ENCODE measurements at regions of chr1 and their contacts with region 1.

Region 1: DNA sequence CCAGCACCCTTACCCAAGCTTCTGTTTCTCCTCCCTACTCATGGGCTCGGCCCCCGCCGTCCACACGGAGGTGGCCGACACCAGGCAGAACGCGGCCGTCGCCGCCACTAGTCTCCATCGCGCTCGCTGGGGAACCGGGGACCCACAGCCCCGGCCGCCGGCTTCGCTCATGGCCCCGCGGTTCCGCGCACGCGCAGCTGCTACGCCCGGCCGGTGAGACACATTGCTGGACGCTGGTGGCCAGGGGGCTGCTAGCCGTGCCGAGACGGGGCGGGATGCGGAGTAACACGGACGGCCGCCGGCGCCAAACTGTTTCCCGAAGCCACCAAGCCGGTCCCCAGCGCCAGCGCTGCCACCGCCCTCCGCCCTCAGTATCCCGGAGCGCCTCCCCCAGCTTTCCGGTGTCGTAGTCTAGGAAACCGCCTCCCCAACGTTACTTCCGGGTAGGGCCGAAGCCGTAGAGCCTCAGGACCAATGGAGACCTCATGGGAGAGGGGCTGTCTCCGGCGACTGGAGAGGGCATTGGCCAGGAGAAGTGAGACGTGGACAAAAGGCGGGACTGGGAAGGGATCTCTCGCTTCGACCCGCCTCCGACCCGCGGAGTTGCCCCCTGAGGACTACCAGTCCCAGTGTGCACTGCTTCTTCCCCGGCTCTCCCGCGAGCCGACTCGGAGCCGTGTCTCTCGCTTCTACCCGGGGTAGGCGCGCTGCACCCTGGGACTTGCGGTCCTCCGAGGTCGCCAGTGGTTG is at the start of gene EDEM3:
- DNase-seq: peak; percentile 99
- H3K4me3 Mint-ChIP-seq: peak within 1 kb of the TSS; percentile 98
- H3K27ac Mint-ChIP-seq: peak within 1 kb of the TSS; percentile 96
- H3K4me1 Mint-ChIP-seq: peaks cover 23% of the 10 kb centered on the region
- H3K27me3 Mint-ChIP-seq: peaks cover 7% of the 10 kb centered on the region
- total RNA-seq, gene EDEM3: 23.6 and 28.3 TPM in 2 replicates

Region 2: DNA sequence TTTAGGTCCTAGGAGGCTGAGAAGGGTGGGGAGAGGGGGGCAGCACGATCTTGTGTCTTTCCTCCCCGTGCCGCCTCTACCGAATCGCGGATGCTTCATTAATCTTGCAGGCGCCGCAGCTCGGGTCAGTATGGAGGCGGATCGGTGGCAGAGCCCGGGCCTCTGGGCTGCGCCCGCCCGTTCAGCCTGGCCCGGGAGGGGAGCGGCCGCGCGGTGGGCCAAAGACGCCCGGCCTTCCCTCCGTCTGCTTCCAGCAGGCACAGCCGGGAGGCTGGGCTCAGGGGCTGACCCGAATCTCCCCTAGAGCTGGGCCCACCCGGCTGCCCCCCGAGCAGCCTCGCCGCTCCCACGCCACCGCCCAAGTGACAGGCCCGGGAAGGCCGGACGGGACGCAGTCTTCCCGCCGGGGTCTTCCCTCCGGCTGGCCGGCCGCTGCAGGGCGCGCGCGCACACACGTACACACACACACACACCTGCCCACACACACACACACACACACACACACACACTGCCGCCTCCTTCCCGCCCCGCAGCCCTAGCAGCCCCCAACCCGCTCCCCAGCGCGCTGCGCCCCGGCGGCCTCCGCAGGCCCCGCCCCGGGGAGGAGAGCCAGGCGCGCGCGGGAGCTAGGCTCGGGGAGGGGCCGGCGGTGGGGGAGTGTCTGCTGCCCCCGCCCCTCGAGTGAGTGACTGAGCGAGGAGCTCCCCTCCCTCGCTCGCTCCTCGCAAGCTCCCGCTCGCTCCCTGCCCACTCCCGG is 368.2 kb before region 1 on chr1 and contains the start of gene C1orf21:
- intact Hi-C with region 1: loop called (anchors 5 kb)
- DNase-seq: peak; percentile 94
- H3K4me3 Mint-ChIP-seq: peak within 1 kb of the TSS; percentile 84
- H3K27ac Mint-ChIP-seq: peak within 1 kb of the TSS; percentile 83
- H3K4me1 Mint-ChIP-seq: peaks cover 16% of the 10 kb centered on the region
- H3K27me3 Mint-ChIP-seq: peaks cover 81% of the 10 kb centered on the region
- total RNA-seq, gene C1orf21: 1.8 and 2.5 TPM in 2 replicates

Region 3: GRCh38 chr1:184792450-184792969 is 37.9 kb after region 1 on chr1:
- intact Hi-C with region 1: loop called (anchors 5 kb)
- DNase-seq: peak; percentile 55
- H3K4me3 Mint-ChIP-seq: no peak overlapping the region
- H3K27ac Mint-ChIP-seq: no peak overlapping the region
- H3K4me1 Mint-ChIP-seq: peaks cover 5% of the 10 kb centered on the region
- H3K27me3 Mint-ChIP-seq: no peaks in the 10 kb centered on the region

Region 4: GRCh38 chr1:184973272-184974055 is 218.8 kb after region 1 on chr1:
- intact Hi-C with region 1: loop called (anchors 1 kb)
- DNase-seq: no peak
- H3K4me3 Mint-ChIP-seq: peak overlapping the region; percentile 91
- H3K27ac Mint-ChIP-seq: peak overlapping the region; percentile 94
- H3K4me1 Mint-ChIP-seq: peaks cover 56% of the 10 kb centered on the region
- H3K27me3 Mint-ChIP-seq: peaks cover 19% of the 10 kb centered on the region